A673 (cell line): ENCODE measurements at regions of chr11 and their contacts with region 1.

Region 1: GRCh38 chr11:62542750-62543567 is 3.6 kb downstream of the AHNAK start:
- DNase-seq: peak; percentile 89
- H3K4me3 ChIP-seq: peak overlapping the region; percentile 66
- H3K27ac ChIP-seq: peak overlapping the region; percentile 32
- H3K4me1 ChIP-seq: peaks cover 68% of the 10 kb centered on the region
- H3K27me3 ChIP-seq: no peaks in the 10 kb centered on the region
- CTCF ChIP-seq: peak; percentile 99

Region 2: GRCh38 chr11:62394825-62395538 is 148.0 kb before region 1 on chr11:
- CTCF ChIA-PET with region 1: interaction called, 18 read pairs
- POLR2A ChIA-PET with region 1: no interaction called
- intact Hi-C with region 1: loop called (anchors 10 kb)
- DNase-seq: peak; percentile 93
- H3K4me3 ChIP-seq: peak overlapping the region; percentile 42
- H3K27ac ChIP-seq: no peak overlapping the region
- H3K4me1 ChIP-seq: no peaks in the 10 kb centered on the region
- H3K27me3 ChIP-seq: no peaks in the 10 kb centered on the region
- CTCF ChIP-seq: peak; percentile 87

Region 3: GRCh38 chr11:62444236-62444833 is 98.6 kb before region 1 on chr11:
- CTCF ChIA-PET with region 1: interaction called, 11 read pairs
- POLR2A ChIA-PET with region 1: no interaction called
- intact Hi-C with region 1: no loop called
- DNase-seq: peak; percentile 87
- H3K4me3 ChIP-seq: peak overlapping the region; percentile 41
- H3K27ac ChIP-seq: peak overlapping the region; percentile 68
- H3K4me1 ChIP-seq: peaks cover 20% of the 10 kb centered on the region
- H3K27me3 ChIP-seq: no peaks in the 10 kb centered on the region
- CTCF ChIP-seq: no peak

Region 4: GRCh38 chr11:62553080-62553838 is 10.3 kb after region 1 on chr11:
- CTCF ChIA-PET with region 1: interaction called, 14 read pairs
- POLR2A ChIA-PET with region 1: no interaction called
- intact Hi-C with region 1: no loop called
- DNase-seq: peak; percentile 76
- H3K4me3 ChIP-seq: no peak overlapping the region
- H3K27ac ChIP-seq: peak overlapping the region; percentile 90
- H3K4me1 ChIP-seq: peaks cover 62% of the 10 kb centered on the region
- H3K27me3 ChIP-seq: no peaks in the 10 kb centered on the region
- CTCF ChIP-seq: no peak

Region 5: DNA sequence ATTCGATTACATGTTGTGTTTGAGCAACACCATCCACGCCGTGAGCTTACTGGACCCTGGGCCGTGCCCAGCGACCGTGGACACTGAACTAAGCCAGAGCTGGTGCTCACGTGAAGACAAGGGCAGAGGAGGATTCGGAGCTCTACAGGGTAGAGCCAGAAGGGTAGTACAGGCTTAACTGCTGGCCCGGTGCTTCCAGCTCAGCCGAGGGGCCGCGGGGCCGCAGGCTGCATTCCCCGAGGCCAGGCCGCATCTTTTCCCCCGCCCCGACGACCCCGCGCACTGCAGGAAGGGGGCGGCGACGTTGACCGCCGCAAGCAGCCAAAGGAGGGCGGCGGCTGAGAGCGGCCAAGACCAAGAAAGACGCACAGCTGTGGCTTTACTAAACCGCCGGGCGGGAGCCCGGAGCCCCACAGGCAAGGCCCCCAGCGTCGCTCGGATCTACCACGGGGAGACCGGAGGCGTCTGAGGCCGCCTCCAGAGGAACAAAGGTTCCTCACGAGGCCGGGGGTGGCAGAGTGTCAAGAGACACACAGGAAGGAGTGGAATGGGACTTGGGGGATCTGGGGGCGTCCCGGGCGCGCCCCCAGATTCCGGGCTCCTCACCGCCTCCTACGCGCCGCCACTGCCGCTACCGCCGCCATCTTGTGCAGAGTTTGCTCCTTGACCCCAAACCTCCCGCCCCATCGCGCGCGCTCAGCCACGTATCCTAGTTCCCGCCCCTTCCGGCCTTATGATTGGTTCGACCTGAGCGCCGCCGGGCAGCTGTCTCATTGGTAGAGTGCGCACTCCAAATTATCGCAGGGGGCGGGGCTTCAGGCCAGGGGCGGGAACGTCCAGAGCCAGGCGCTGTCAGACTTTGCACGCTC is 103.2 kb after region 1 on chr11 and contains the start of gene GANAB:
- CTCF ChIA-PET with region 1: interaction called, 11 read pairs
- POLR2A ChIA-PET with region 1: no interaction called
- intact Hi-C with region 1: no loop called
- DNase-seq: peak; percentile 100
- H3K4me3 ChIP-seq: peak within 1 kb of the TSS; percentile 96
- H3K27ac ChIP-seq: peak within 1 kb of the TSS; percentile 97
- H3K4me1 ChIP-seq: peaks cover 8% of the 10 kb centered on the region
- H3K27me3 ChIP-seq: no peaks in the 10 kb centered on the region
- CTCF ChIP-seq: no peak
- total RNA-seq, gene GANAB: 475 and 489 TPM in 2 replicates